Cardiac septum (tissue), 1 donor: ENCODE measurements at regions of chr13 and their contacts with region 1.

Region 1: GRCh38 chr13:75850916-75851315 is 214.8 kb downstream of the LMO7 start:
- DNase-seq: no peak

Region 2: DNA sequence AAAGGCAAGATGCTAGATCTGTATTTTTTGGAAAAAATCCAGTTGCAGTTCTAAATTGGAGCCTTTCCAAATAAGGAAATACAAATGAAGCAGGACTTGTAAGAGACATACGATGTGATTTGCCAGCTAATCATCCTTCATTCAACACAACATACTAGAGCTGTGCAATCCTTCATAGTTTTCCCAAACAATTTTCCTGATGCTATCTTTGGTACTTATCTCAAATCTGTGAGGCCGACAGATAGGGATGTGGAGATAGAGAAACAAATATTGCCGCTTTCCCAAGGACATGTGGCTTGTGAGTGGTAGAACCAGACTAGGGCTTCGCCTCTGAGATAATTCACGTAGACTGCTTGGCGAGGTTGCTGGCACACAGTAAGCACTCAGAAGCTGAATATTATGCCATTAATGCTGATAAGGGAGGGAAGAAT is 38.1 kb before region 1 on chr13:
- intact Hi-C with region 1: loop called (anchors 5 kb)
- DNase-seq: no peak